Gastrocnemius medialis (tissue), 4 donors: ENCODE measurements at regions of chr20 and their contacts with region 1.

Region 1: DNA sequence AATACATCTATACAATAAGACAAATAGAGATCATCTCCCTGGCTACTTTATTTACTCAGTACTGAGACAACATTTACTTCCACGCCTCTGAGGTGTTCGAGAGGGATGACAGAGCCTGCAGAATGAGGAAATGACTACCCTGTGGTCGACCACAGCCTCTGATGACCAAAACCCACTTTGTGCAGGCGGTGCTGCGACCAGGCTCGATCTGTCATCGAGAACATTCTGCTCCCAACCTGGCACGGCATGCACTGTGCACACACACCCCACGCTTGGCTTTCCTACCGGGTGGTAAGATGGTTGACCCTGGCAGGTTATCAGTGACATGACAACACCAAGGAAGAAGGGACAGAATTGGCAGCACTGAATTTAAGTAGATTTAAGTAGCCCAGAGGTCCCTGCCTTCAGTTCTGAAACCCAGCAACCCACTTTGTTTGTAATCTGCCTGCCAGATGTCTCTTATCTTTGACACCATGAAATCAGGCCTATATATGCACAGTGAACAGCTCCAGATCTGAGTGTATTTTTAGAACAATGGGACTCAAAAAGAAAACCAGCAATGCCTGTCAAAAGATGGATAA is 42.6 kb downstream of the TTI1 start:
- DNase-seq: peak; percentile 75 to 79
- ATAC-seq: peak in 1 of 2 donors; percentile 2
- H3K4me3 ChIP-seq: no peak overlapping the region
- H3K27ac ChIP-seq: peak overlapping the region; percentile 84 to 93 (median 90)
- H3K4me1 ChIP-seq: peaks cover 91 to 94% of the 10 kb centered on the region in 2 donors
- H3K27me3 ChIP-seq: no peaks in the 10 kb centered on the region
- CTCF ChIP-seq: no peak
- POLR2A ChIP-seq: peak in 1 of 2 donors; percentile 29

Region 2: DNA sequence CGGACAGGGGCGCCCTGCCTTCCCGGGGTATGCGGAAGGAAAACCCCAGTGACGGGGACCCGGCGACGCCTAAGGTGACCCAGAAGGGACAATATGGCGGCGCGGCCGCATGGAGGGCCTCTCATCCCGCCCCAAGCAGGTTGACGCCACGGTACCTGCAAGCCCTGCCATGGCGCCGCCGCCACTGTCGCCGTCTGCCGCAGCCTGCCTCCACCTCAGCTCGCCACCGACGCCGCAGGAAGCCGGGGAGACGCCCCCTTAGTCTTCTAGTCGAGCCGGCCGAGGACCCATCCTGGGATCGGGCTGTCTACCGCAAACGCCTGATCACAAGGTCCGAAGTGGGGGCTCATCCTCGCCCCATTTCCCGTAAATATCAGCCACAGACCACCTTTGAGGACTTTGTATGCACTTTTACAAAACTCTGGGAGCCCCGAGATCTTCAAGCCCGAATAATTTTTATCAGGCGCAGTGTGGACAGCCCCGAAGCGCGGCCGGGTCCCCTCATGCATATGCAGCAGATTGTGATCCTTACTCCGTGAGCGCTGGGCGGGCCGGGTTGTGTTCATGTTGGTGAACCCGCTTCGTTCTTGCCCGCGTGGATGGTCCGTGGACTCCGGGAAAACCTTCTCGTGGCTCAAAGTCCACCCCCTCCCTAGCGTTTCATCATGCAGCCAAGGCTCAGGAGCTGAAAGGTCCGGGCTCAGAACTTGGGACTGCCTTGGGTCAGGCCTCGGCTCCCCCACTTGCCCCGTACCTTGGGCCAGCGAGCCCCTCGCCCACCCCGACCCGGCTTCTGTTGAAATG is 462.8 kb before region 1 on chr20 and contains the start of gene BLCAP:
- in situ Hi-C with region 1: no loop called
- intact Hi-C with region 1: loop called (anchors 5 kb)
- DNase-seq: peak; percentile 85 to 91
- ATAC-seq: peak; percentile 54 to 59
- H3K4me3 ChIP-seq: peak within 1 kb of the TSS; percentile 92 to 100 (median 99)
- H3K27ac ChIP-seq: peak within 1 kb of the TSS; percentile 98 to 100 (median 98)
- H3K4me1 ChIP-seq: peaks cover 34 to 36% of the 10 kb centered on the region in 2 donors
- H3K27me3 ChIP-seq: no peaks in the 10 kb centered on the region
- CTCF ChIP-seq: no peak
- POLR2A ChIP-seq: peak; percentile 98
- total RNA-seq, gene BLCAP: 222 to 583 (median 280) TPM

Region 3: DNA sequence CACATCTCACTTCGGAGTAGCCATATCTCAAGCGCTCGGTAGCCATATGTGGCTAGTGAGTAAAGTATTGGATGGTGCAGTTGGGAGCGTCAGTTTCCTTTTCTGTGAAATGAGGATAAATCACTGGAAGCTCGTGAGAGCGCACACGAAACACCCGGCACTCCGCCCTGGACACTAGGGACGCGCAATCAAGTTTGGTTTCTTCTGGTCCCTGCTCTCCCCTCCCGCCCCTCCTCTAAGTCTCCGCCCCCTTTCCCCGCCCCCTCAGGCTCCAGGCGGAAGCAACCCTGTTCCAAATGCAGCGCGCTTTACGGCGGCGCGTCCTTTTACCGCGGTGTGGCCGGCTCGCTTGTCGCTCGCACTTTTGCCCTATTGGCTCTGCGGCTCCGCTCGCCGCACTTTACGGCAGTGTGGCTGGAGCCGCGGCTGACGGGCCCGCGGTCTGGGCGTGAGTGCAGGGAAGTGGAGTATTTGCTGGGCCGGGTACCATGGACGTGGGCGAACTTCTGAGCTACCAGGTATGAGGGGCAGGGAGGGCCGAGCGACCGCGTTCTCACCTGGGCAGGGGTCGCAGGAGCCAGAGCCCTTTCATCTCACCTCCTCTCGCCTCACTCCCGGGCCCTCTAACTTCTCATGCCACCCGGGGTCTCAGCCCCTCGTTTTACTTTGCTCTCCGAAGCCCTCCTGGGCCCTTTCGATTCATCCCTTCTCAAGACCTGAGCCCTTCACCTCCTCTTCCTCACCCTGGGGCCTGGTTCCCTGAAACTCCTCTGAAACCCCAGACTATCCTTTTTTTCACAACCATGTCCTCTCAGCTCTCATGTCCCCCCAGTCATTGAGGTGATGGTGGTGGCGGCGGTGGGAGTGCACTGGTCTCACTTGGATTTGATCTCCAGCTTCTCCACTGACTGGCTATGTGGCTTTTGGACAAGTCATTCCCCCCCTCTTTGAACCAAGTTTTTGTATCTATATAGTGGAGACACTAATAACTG is 296.7 kb before region 1 on chr20 and contains the start of gene CTNNBL1:
- in situ Hi-C with region 1: no loop called
- intact Hi-C with region 1: loop called (anchors 2 kb)
- DNase-seq: peak; percentile 94 to 97
- ATAC-seq: peak; percentile 97 to 99
- H3K4me3 ChIP-seq: peak within 1 kb of the TSS; percentile 67 to 93 (median 84)
- H3K27ac ChIP-seq: peak within 1 kb of the TSS; percentile 77 to 79 (median 78)
- H3K4me1 ChIP-seq: peaks cover 12 to 18% of the 10 kb centered on the region in 2 donors
- H3K27me3 ChIP-seq: no peaks in the 10 kb centered on the region
- CTCF ChIP-seq: peak in 3 of 5 experiments; percentile 10 to 27 (median 17)
- POLR2A ChIP-seq: peak; percentile 62 to 76
- total RNA-seq, gene CTNNBL1: 23.1 to 35.4 (median 30.3) TPM

Region 4: DNA sequence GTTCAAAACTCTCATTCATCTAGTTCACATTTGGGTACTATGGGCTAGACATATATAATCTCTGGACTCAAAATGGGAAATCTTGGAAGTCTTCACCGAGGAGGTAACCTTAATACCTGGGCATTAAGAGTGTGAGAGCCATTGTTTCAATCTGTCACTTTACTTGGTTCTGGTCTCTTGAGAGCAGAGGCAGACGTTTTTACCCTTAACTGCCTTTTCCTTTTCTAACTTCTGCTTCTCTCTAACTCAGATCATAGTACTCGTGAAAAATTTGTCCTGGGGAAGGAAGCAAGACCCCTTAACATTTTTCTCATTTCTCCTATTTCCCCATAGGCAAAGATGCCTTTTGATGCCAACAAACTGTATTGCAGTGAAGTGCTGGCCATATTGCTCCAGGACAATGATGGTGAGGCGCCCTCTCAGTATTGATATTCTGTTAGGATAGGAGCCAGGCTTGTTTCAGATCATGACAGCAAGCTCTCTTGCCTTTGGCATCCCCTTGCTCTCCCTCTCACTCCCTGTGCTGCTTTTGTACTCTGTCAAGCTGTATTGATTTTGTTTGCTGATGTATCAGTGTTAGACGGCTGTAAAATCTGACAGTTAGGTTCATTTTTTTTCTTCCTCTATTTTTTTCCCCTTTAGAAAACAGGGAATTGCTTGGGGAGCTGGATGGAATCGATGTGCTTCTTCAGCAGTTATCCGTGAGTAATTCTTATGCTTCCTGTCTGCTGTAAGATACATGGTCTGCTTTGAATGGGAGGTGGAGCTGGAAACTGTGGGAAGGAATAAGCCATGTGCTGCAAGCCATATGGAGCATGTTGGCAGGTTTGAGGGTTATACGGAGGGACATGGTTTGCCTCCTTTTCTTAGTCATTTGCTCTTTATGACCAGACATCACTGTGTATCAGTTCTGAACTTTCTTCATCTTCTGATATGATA is 213.4 kb before region 1 on chr20:
- in situ Hi-C with region 1: loop called in 3 of 4 experiments (anchors 25 kb)
- intact Hi-C with region 1: loop called (anchors 2 kb)
- DNase-seq: no peak
- ATAC-seq: no peak
- H3K4me3 ChIP-seq: no peak overlapping the region
- H3K27ac ChIP-seq: no peak overlapping the region
- H3K4me1 ChIP-seq: peaks cover 39 to 62% of the 10 kb centered on the region in 2 donors
- H3K27me3 ChIP-seq: no peaks in the 10 kb centered on the region
- CTCF ChIP-seq: no peak
- POLR2A ChIP-seq: no peak

Region 5: GRCh38 chr20:38033310-38034107 is 42.8 kb after region 1 on chr20 and contains the starts of genes RPRD1B and TTI1:
- in situ Hi-C with region 1: no loop called
- intact Hi-C with region 1: loop called (anchors 2 kb)
- DNase-seq: peak; percentile 81 to 87
- ATAC-seq: peak; percentile 94
- H3K4me3 ChIP-seq: peak within 1 kb of the TSS; percentile 77 to 98 (median 92)
- H3K27ac ChIP-seq: peak within 1 kb of the TSS; percentile 95 to 97 (median 96)
- H3K4me1 ChIP-seq: peaks cover 58 to 62% of the 10 kb centered on the region in 2 donors
- H3K27me3 ChIP-seq: no peaks in the 10 kb centered on the region
- CTCF ChIP-seq: no peak
- POLR2A ChIP-seq: peak; percentile 73 to 85
- total RNA-seq, gene RPRD1B: 25.2 to 61.0 (median 40.6) TPM
- total RNA-seq, gene TTI1: 14.8 to 25.4 (median 20.3) TPM

Region 6: GRCh38 chr20:38165089-38165989 is 174.7 kb after region 1 on chr20 and contains the start of gene TGM2:
- in situ Hi-C with region 1: no loop called
- intact Hi-C with region 1: loop called (anchors 5 kb)
- DNase-seq: peak; percentile 65 to 71
- ATAC-seq: peak; percentile 75 to 85
- H3K4me3 ChIP-seq: peak within 1 kb of the TSS; percentile 45 to 70 (median 58)
- H3K27ac ChIP-seq: peak within 1 kb of the TSS; percentile 51 to 82 (median 68)
- H3K4me1 ChIP-seq: peaks cover 14 to 20% of the 10 kb centered on the region in 2 donors
- H3K27me3 ChIP-seq: no peaks in the 10 kb centered on the region
- CTCF ChIP-seq: peak; percentile 86 to 99 (median 96)
- POLR2A ChIP-seq: peak; percentile 34 to 75
- total RNA-seq, gene TGM2: 12.8 to 152 (median 58.4) TPM